MCF 10A (cell line): ENCODE measurements at regions of chr1 and their contacts with region 1.

Region 1: DNA sequence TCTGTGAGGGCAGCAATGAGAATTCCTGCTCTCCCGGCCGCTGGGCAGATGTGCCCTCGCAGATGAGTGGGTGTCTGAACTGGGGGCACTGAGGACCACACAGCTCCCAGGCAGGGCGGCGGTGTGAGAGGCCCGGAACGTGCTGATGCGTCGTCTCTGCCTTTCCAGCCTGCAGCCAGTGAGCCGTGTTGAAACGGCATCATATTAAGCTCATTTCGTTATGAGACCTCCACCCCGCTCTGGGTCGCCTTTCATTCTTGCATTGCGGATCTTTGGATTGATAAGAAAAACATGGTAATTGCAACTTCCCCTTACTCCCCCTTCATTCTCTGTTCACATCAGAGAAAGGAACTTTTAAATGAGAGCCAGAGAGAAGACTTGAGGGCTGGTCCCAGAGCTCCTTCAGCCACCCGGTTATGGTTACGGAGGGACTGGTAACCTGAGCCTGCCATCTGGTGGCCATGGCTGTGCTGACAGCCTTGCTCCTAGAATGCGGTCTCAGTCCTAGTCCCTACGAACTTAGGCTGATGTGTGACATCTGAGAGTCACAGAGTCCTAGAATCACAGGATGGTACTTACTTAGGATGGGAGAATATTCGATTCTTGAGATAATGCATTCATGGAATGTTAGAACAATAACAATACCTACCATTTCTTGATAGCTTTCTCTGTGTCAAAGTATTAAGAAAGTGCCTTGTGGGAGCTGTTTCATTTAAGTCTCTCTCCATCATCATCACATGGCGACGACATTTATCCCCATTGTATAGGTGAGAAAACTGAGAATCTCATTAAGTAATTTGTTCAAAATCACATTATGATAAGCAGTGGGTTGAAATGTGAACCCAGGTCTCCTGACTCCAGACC is 271.0 kb downstream of the TRABD2B start:
- DNase-seq: peak; percentile 76
- H3K4me3 Mint-ChIP-seq: peak overlapping the region; percentile 22
- H3K27ac Mint-ChIP-seq: no peak overlapping the region
- H3K4me1 Mint-ChIP-seq: peaks cover 9% of the 10 kb centered on the region
- H3K27me3 Mint-ChIP-seq: no peaks in the 10 kb centered on the region
- CTCF ChIP-seq: peak; percentile 75

Region 2: DNA sequence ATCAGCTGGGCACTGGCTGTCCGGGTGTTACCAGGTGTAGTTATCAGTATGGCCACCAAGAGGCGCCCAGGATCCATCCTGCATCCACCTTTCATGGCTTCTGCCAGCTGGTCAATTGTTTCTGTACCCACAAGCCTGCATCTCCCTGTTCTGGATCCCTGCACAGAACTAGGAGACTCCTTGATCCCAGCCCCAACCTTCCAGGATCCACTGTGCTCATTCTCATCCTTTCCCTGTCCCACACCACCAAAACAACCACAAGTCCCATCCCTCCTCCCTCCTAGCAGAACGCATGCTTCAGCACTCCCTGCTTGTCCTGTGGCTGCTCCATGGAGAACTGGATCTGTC is 337.4 kb before region 1 on chr1:
- CTCF ChIA-PET with region 1: interaction called, 91 read pairs
- POLR2A ChIA-PET with region 1: interaction called, 5 read pairs
- intact Hi-C with region 1: loop called (anchors 1 kb)
- DNase-seq: peak; percentile 81
- H3K4me3 Mint-ChIP-seq: no peak overlapping the region
- H3K27ac Mint-ChIP-seq: no peak overlapping the region
- H3K4me1 Mint-ChIP-seq: no peaks in the 10 kb centered on the region
- H3K27me3 Mint-ChIP-seq: no peaks in the 10 kb centered on the region
- CTCF ChIP-seq: peak; percentile 94

Region 3: DNA sequence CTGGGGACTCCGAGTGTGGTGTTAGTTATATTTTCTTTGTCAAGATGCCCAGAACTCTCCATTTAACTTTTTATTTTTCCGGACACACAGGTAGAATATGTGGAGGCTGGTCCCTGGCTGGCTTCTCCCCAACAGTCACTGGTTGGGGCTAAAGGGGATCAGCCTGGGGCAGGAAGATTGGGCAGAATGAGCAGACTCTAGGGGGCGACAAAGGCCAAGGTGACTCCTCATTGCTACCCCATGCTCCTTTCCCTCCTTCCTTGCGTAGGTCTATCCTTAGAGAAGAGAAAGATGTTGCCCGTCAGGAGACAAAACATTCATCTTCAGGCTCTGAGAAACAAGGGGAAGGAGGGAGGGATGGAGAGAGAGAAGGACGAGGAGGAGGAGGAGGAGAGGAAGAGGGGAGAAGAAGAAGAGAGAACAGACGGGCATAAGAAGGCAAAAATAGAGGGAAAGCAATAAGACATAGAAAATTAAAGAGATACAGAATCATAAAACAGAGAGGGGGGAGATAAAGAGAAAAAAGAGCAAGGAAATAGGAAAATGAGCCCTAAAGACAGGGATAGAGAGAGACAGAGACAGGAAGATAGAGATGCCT is 198.5 kb before region 1 on chr1:
- CTCF ChIA-PET with region 1: interaction called, 17 read pairs
- POLR2A ChIA-PET with region 1: no interaction called
- intact Hi-C with region 1: loop called (anchors 1 kb)
- DNase-seq: peak; percentile 51
- H3K4me3 Mint-ChIP-seq: no peak overlapping the region
- H3K27ac Mint-ChIP-seq: no peak overlapping the region
- H3K4me1 Mint-ChIP-seq: no peaks in the 10 kb centered on the region
- H3K27me3 Mint-ChIP-seq: no peaks in the 10 kb centered on the region
- CTCF ChIP-seq: peak; percentile 46

Region 4: GRCh38 chr1:47684964-47685762 is 41.1 kb before region 1 on chr1:
- CTCF ChIA-PET with region 1: interaction called, 10 read pairs
- POLR2A ChIA-PET with region 1: no interaction called
- intact Hi-C with region 1: no loop called
- DNase-seq: no peak
- H3K4me3 Mint-ChIP-seq: no peak overlapping the region
- H3K27ac Mint-ChIP-seq: no peak overlapping the region
- H3K4me1 Mint-ChIP-seq: no peaks in the 10 kb centered on the region
- H3K27me3 Mint-ChIP-seq: no peaks in the 10 kb centered on the region
- CTCF ChIP-seq: no peak

Region 5: GRCh38 chr1:47710329-47711071 is 15.7 kb before region 1 on chr1:
- CTCF ChIA-PET with region 1: interaction called, 65 read pairs
- POLR2A ChIA-PET with region 1: interaction called, 6 read pairs
- intact Hi-C with region 1: no loop called
- DNase-seq: peak; percentile 47
- H3K4me3 Mint-ChIP-seq: no peak overlapping the region
- H3K27ac Mint-ChIP-seq: no peak overlapping the region
- H3K4me1 Mint-ChIP-seq: no peaks in the 10 kb centered on the region
- H3K27me3 Mint-ChIP-seq: peaks cover 54% of the 10 kb centered on the region
- CTCF ChIP-seq: peak; percentile 99

Region 6: DNA sequence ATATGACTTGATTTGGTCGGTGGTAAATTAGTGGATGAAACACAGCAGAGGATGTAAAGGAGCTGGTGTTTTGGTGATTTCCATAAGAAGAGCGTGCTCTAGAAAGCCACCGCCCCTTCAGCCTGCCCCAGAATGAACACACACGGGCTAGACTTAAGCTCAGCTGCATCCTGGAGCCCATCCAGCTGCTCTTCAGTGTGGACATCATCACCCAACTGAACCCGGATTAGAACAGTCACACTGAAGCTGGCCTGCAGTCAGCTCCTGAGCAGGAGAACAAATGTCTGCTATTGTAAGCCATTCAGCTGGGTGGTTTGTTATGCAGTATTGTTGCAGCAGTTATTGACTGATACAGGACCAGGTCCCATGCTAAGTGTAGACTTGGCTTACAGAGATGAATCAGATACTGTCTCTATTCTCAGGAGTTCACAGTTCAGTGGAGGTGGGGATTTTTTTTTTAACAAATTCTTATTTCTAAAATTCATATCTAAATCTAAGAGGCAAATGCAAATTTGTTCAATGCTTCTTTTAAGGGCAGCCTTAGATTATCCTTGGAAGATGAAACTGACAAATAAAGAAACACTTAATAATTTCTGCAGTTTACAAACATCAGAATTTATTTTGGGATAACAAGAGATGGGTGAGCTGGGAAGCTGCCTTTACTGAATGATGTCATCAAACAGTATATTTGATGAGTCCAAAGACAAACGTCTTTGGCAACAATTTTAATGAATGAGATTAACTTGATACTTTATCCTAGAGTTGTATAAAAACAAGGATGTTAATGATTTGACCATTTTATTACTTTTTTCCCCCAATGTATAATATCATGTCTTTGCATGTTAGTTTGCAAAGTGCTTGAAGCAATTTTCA is 19.7 kb after region 1 on chr1:
- CTCF ChIA-PET with region 1: interaction called, 23 read pairs
- POLR2A ChIA-PET with region 1: interaction called, 4 read pairs
- intact Hi-C with region 1: no loop called
- DNase-seq: no peak
- H3K4me3 Mint-ChIP-seq: no peak overlapping the region
- H3K27ac Mint-ChIP-seq: no peak overlapping the region
- H3K4me1 Mint-ChIP-seq: no peaks in the 10 kb centered on the region
- H3K27me3 Mint-ChIP-seq: peaks cover 13% of the 10 kb centered on the region
- CTCF ChIP-seq: no peak